Caco-2 (cell line): ENCODE measurements at regions of chr17 and their contacts with region 1.

Region 1: DNA sequence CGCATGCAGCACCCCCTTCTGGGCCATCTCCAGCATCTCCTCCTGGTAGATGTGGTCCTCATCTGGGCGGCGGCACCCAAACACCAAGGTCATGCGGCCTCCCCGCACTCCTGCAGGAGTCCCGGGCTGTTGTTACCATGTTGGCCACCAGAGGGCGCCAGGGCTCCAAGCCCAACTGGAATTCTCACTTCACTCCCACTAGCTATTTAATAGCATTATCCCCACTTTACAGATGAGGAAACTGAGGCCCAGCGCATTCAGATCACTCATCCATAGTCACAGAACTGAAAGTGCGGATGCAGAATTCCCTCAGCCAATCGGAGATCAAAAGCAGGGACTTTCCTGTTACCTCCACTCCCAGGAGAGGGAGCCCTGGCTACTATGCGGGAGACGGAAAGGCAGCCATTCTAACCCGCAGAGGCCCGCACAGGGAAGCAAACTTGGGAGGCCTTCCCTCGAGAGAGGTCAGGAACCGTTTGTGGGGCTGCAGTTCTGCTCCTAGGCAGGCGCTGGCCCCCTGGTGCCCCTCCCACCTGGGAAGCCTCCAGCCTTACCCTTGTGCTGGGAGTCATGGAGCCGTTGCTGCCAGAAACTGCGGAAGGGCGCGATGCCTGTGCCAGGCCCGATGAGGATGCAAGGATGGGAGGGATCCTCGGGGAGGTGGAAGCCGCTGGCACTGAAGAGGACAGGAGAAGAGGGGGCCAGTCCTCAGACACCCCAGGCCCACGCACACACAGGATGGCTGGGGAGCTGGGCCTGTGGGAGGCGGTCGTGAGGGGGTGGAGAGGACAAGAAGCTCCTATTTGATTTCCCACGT is 40.1 kb downstream of the NOS2 start:
- DNase-seq: peak; percentile 85 to 92
- H3K4me3 ChIP-seq: no peak overlapping the region
- H3K4me3 Mint-ChIP-seq: no peak overlapping the region
- H3K27ac Mint-ChIP-seq: no peak overlapping the region
- H3K4me1 ChIP-seq: no peaks in the 10 kb centered on the region
- H3K4me1 Mint-ChIP-seq: no peaks in the 10 kb centered on the region
- H3K27me3 ChIP-seq: no peaks in the 10 kb centered on the region
- H3K27me3 Mint-ChIP-seq: no peaks in the 10 kb centered on the region
- CTCF ChIP-seq: peak; percentile 97 to 100

Region 2: DNA sequence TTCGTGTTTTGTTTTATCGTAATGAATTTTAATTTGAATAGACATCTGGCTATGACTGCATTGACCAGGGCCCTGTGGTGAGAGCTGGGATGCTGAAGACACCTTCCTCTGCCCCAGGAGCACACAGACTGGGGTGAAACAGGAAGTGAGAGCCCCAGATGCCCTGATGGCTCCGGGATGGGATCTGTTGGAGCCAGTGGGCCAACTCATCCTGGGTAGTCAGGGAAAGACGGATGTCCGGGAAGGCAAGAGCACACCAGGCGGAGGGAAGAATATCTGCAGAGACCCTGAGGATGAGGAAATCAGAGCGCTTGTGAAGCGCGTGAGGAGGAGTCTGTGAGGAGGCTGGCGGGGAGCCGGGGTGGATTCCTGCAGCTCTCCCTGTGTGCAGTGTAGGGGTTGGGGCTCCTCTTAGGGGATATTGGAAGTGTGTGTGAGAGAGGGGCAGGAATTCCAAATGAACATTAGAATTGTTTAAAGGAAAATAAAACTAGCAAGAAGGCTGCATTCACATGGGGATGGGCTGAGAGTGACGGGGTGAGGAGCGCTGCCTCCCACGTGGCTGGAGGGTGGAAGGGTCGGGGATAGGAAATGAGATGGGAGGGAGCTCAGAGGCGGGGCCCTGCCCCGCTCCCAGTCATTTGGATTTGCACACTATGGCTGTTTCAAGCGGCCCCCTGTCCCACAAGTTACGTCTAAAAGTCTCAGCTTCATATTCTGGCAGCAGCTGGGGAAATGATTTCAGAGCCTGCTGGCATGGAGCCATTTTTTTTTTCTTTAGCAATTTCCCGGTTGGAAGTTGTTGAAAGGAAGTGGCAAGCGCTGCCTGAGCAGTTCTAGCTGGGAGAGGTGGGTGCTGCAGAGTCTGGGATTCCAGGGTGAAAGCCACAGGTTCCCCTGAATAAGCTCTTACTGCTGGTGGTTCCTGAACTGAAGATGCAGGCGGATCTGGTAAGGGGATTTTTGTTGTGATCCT is 200.5 kb before region 1 on chr17:
- CTCF ChIA-PET with region 1: no interaction called
- POLR2A ChIA-PET with region 1: no interaction called
- intact Hi-C with region 1: no loop called
- DNase-seq: no peak
- H3K4me3 ChIP-seq: no peak overlapping the region
- H3K4me3 Mint-ChIP-seq: no peak overlapping the region
- H3K27ac Mint-ChIP-seq: peak overlapping the region; percentile 5
- H3K4me1 ChIP-seq: peaks cover 12% of the 10 kb centered on the region
- H3K4me1 Mint-ChIP-seq: peaks cover 22% of the 10 kb centered on the region
- H3K27me3 ChIP-seq: no peaks in the 10 kb centered on the region
- H3K27me3 Mint-ChIP-seq: no peaks in the 10 kb centered on the region
- CTCF ChIP-seq: no peak

Region 3: GRCh38 chr17:27609611-27610303 is 150.5 kb before region 1 on chr17:
- CTCF ChIA-PET with region 1: interaction called, 15 read pairs
- POLR2A ChIA-PET with region 1: no interaction called
- intact Hi-C with region 1: loop called (anchors 1 kb)
- DNase-seq: peak; percentile 75 to 79
- H3K4me3 ChIP-seq: no peak overlapping the region
- H3K4me3 Mint-ChIP-seq: no peak overlapping the region
- H3K27ac Mint-ChIP-seq: no peak overlapping the region
- H3K4me1 ChIP-seq: no peaks in the 10 kb centered on the region
- H3K4me1 Mint-ChIP-seq: no peaks in the 10 kb centered on the region
- H3K27me3 ChIP-seq: no peaks in the 10 kb centered on the region
- H3K27me3 Mint-ChIP-seq: no peaks in the 10 kb centered on the region
- CTCF ChIP-seq: peak; percentile 84 to 99

Region 4: DNA sequence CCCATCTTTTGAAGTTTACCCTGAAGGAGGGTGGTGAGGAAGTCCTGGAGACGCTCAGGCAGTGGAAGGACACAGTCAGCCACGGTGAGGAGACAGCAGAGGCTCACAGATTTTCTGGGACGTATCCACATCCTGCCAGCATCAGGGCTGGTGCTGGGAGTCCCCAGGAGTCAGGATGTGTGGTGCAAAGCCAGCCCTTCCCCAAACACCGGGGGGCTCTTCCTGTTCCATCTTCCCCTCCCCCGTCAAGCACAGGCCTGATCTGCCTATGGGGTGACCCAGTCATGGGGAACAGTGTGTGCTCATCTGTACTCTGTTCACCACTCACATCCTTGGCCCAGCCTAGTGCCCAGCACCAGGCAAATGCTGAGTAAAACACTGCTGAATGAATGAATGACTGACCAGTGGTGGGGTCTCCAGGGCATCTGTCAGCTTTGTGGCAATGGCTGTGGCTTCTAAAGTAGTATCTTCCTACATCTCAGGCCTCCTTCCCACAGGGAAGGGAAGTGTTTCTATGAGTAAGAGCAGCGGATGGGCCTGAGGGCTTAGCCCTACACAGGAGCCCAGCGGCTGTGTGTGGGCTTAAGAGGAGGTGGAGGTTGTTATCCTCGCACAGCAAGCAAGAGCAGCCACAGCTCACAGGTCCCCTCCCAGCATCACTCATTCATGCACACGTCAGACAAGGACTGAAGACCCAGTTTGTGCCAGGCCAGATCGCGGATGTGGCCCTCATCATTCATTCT is 16.8 kb after region 1 on chr17:
- CTCF ChIA-PET with region 1: interaction called, 11 read pairs
- POLR2A ChIA-PET with region 1: no interaction called
- intact Hi-C with region 1: no loop called
- DNase-seq: no peak
- H3K4me3 ChIP-seq: no peak overlapping the region
- H3K4me3 Mint-ChIP-seq: no peak overlapping the region
- H3K27ac Mint-ChIP-seq: no peak overlapping the region
- H3K4me1 ChIP-seq: no peaks in the 10 kb centered on the region
- H3K4me1 Mint-ChIP-seq: peaks cover 8% of the 10 kb centered on the region
- H3K27me3 ChIP-seq: no peaks in the 10 kb centered on the region
- H3K27me3 Mint-ChIP-seq: no peaks in the 10 kb centered on the region
- CTCF ChIP-seq: no peak

Region 5: GRCh38 chr17:27793168-27793905 is 33.1 kb after region 1 on chr17:
- CTCF ChIA-PET with region 1: interaction called, 10 read pairs
- POLR2A ChIA-PET with region 1: no interaction called
- intact Hi-C with region 1: loop called (anchors 1 kb)
- DNase-seq: peak; percentile 83 to 90
- H3K4me3 ChIP-seq: peak overlapping the region; percentile 56
- H3K4me3 Mint-ChIP-seq: peak overlapping the region; percentile 80
- H3K27ac Mint-ChIP-seq: peak overlapping the region; percentile 53
- H3K4me1 ChIP-seq: peaks cover 42% of the 10 kb centered on the region
- H3K4me1 Mint-ChIP-seq: peaks cover 44% of the 10 kb centered on the region
- H3K27me3 ChIP-seq: no peaks in the 10 kb centered on the region
- H3K27me3 Mint-ChIP-seq: no peaks in the 10 kb centered on the region
- CTCF ChIP-seq: no peak